HepG2 (cell line): ENCODE measurements at regions of chr13 and their contacts with region 1.

Region 1: GRCh38 chr13:98142380-98143156 is at the start of gene FARP1:
- DNase-seq: peak; percentile 62
- ATAC-seq: peak; percentile 89
- H3K4me3 ChIP-seq: peak within 1 kb of the TSS; percentile 82 to 98 (median 92)
- H3K27ac ChIP-seq: peak within 1 kb of the TSS; percentile 88
- H3K4me1 ChIP-seq: peaks cover 36% of the 10 kb centered on the region
- H3K27me3 ChIP-seq: no peaks in the 10 kb centered on the region; a peak in 1 of 5 replicates
- CTCF ChIP-seq: peak; percentile 44; the same call in 1 of the 2 replicates
- EP300 ChIP-seq: peak in 1 of 2 experiments; percentile 4; a peak in 1 of 4 replicates
- POLR2A ChIP-seq: peak; percentile 40 to 56; a peak in 3 of 4 replicates
- RAD21 ChIP-seq: peak; percentile 99
- total RNA-seq, gene FARP1: 70.1 and 70.6 TPM in 2 replicates

Region 2: DNA sequence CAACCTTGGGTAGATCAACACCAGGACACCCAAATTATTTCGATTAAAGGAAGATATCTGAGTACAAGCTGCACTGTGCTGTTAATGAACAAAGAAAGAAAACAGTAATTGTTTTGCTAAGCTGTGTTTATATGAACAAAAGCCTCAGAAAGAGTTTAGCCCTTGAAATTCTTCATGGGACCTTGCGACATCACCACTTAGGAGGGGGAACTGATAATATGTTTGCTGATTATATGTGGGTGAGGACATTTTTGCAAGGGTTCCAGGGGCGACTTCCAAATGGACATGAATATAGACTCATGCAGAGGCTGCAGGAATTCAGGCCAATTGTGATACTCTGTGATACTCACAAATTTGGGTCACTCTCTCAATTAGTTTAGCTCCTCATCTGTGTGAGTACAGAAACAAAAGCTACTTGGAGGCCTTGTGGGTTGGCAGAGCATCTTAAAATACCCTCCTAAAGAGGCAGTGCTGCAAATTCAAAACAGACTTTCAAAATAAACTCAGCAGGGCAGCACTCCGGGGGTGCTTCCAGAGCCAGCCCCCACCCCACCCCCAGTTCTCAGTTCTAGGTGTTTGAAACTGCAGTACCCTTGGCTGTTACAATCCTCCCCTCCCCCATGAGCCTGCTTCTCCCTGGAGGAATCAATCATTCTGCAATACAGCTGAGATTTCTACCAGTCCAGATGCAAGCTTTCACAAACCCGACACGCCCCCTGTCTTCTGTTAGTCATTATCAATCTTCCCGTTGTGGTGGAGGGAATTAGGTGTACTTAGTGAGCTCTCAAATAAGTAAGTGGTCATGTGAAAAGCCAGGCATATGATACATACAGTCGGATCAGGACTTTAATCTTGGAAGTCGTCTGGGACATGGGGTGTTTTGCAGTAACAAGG is 1017.4 kb before region 1 on chr13:
- CTCF ChIA-PET with region 1: no interaction called
- POLR2A ChIA-PET with region 1: no interaction called
- in situ Hi-C with region 1: no loop called
- intact Hi-C with region 1: no loop called
- DNase-seq: peak; percentile 17
- ATAC-seq: no peak
- H3K4me3 ChIP-seq: no peak overlapping the region
- H3K27ac ChIP-seq: no peak overlapping the region
- H3K4me1 ChIP-seq: peaks cover 23% of the 10 kb centered on the region
- H3K27me3 ChIP-seq: 0 out of 5 replicates have a peak, but pooled peaks cover 0 to 7% of the 10 kb centered on the region in 2 experiments
- CTCF ChIP-seq: 0 out of 2 replicates have a peak, but pooled peaks have one; percentile 9
- EP300 ChIP-seq: no peak
- POLR2A ChIP-seq: no peak
- RAD21 ChIP-seq: no peak

Region 3: DNA sequence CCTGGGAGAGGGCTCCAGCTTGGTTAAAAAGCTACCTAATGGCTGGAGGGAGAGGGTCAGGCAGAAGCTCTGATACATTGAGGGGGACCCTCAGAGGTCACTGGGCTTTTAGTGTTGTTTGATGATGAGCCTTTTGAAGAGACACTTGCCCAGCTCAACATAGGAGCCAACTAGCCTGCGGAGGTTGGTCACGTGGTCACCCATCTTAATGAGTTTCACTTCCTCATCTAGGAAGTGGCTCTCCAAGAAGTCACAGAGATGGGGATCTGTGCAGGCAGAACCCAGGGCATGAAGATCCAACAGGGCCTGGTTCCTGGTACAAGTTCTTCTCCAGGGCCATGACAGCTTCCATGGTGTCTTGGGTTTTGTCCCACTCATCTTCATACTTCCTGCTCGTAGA is 155.7 kb before region 1 on chr13:
- CTCF ChIA-PET with region 1: no interaction called
- POLR2A ChIA-PET with region 1: no interaction called
- in situ Hi-C with region 1: no loop called
- intact Hi-C with region 1: no loop called
- DNase-seq: no peak
- ATAC-seq: no peak
- H3K4me3 ChIP-seq: no peak overlapping the region
- H3K27ac ChIP-seq: no peak overlapping the region
- H3K4me1 ChIP-seq: peaks cover 8% of the 10 kb centered on the region
- H3K27me3 ChIP-seq: no peaks in the 10 kb centered on the region
- CTCF ChIP-seq: no peak
- EP300 ChIP-seq: no peak
- POLR2A ChIP-seq: no peak
- RAD21 ChIP-seq: no peak

Region 4: GRCh38 chr13:98155475-98156109 is 13.0 kb after region 1 on chr13:
- CTCF ChIA-PET with region 1: no interaction called
- POLR2A ChIA-PET with region 1: interaction called, 9 read pairs
- in situ Hi-C with region 1: no loop called
- intact Hi-C with region 1: loop called (anchors 2 kb)
- DNase-seq: no peak
- ATAC-seq: no peak
- H3K4me3 ChIP-seq: no peak overlapping the region
- H3K27ac ChIP-seq: peak overlapping the region; percentile 23
- H3K4me1 ChIP-seq: peaks cover 95% of the 10 kb centered on the region
- H3K27me3 ChIP-seq: no peaks in the 10 kb centered on the region
- CTCF ChIP-seq: no peak
- EP300 ChIP-seq: no peak
- POLR2A ChIP-seq: no peak
- RAD21 ChIP-seq: no peak

Region 5: DNA sequence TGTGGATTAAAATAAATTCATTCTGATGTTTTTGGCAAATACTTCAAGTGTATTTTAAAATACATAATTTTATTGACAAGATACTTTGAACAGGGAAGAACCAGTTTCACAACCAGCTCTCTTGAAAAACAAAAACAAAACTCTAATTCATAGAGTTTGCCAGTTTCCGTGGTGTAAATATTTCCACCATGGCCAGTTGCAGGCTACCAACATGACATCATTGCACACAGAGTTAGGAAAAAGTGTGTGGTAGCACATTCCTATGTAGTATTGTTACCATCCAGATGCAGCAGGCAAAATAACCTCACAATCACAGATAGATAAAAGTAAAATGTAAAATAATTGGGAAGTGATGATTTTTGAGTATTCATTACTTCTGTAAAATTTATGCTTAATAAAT is 42.2 kb after region 1 on chr13:
- CTCF ChIA-PET with region 1: no interaction called
- POLR2A ChIA-PET with region 1: no interaction called
- in situ Hi-C with region 1: no loop called
- intact Hi-C with region 1: no loop called
- DNase-seq: no peak
- ATAC-seq: no peak
- H3K4me3 ChIP-seq: no peak overlapping the region
- H3K27ac ChIP-seq: no peak overlapping the region
- H3K4me1 ChIP-seq: peaks cover 78% of the 10 kb centered on the region
- H3K27me3 ChIP-seq: no peaks in the 10 kb centered on the region
- CTCF ChIP-seq: no peak
- EP300 ChIP-seq: no peak
- POLR2A ChIP-seq: no peak
- RAD21 ChIP-seq: no peak

Region 6: GRCh38 chr13:98246538-98247172 is 104.1 kb after region 1 on chr13:
- CTCF ChIA-PET with region 1: no interaction called
- POLR2A ChIA-PET with region 1: interaction called, 5 read pairs
- in situ Hi-C with region 1: no loop called
- intact Hi-C with region 1: loop called (anchors 5 kb)
- DNase-seq: peak; percentile 96
- ATAC-seq: peak; percentile 92
- H3K4me3 ChIP-seq: no peak overlapping the region; a peak in 1 of 6 replicates
- H3K27ac ChIP-seq: peak overlapping the region; percentile 87
- H3K4me1 ChIP-seq: peaks cover 100% of the 10 kb centered on the region
- H3K27me3 ChIP-seq: no peaks in the 10 kb centered on the region
- CTCF ChIP-seq: no peak
- EP300 ChIP-seq: peak in 1 of 2 experiments; percentile 82; a peak in 2 of 4 replicates
- POLR2A ChIP-seq: no peak
- RAD21 ChIP-seq: no peak

Region 7: GRCh38 chr13:98279473-98280175 is 137.1 kb after region 1 on chr13:
- CTCF ChIA-PET with region 1: no interaction called
- POLR2A ChIA-PET with region 1: no interaction called
- in situ Hi-C with region 1: loop called (anchors 10 kb)
- intact Hi-C with region 1: no loop called
- DNase-seq: no peak
- ATAC-seq: no peak; the same call in 1 of the 3 replicates
- H3K4me3 ChIP-seq: no peak overlapping the region
- H3K27ac ChIP-seq: no peak overlapping the region
- H3K4me1 ChIP-seq: peaks cover 61% of the 10 kb centered on the region
- H3K27me3 ChIP-seq: no peaks in the 10 kb centered on the region
- CTCF ChIP-seq: no peak
- EP300 ChIP-seq: no peak
- POLR2A ChIP-seq: no peak
- RAD21 ChIP-seq: no peak

Region 8: GRCh38 chr13:98349731-98350305 is 207.2 kb after region 1 on chr13:
- CTCF ChIA-PET with region 1: no interaction called
- POLR2A ChIA-PET with region 1: no interaction called
- in situ Hi-C with region 1: no loop called
- intact Hi-C with region 1: loop called (anchors 1 kb)
- DNase-seq: peak; percentile 21
- ATAC-seq: peak; percentile 87
- H3K4me3 ChIP-seq: no peak overlapping the region
- H3K27ac ChIP-seq: no peak overlapping the region
- H3K4me1 ChIP-seq: no peaks in the 10 kb centered on the region
- H3K27me3 ChIP-seq: no peaks in the 10 kb centered on the region
- CTCF ChIP-seq: peak; percentile 65
- EP300 ChIP-seq: no peak
- POLR2A ChIP-seq: no peak
- RAD21 ChIP-seq: peak; percentile 34; the same call in 1 of the 2 replicates